ENCODE measurements at regions of chr7 and their contacts with region 1.

Region 1: GRCh38 chr7:104883718-104884452 is 130.1 kb upstream of the KMT2E start:
- DNase-seq: peak; percentile 83 to 97
- H3K4me3 ChIP-seq: no peak overlapping the region
- CTCF ChIP-seq: peak in 1 of 3 donors; percentile 27
- POLR2A ChIP-seq: no peak

Region 2: DNA sequence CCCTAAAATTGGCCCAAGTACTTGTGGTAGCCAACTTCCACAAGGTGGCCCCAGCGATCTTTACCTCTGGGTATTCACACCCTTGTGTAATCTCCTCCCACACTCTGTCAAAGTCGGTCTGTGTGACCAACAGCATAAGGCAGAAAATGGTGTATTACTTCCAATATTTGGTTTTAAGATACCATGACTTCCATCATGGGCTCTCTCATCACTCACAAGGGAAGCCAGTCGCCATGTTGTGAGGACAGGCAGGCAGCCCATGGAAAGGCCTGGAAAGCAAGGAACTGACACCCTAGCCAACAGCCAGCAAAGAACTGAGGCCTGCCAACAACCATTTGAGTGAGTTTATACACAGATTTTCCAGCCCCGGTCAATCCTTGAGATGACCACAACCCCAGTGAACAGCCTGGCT is 39.1 kb after region 1 on chr7:
- intact Hi-C with region 1: loop called (anchors 5 kb)
- DNase-seq: peak; percentile 79 to 88
- H3K4me3 ChIP-seq: no peak overlapping the region
- CTCF ChIP-seq: peak in 1 of 3 donors; percentile 60
- POLR2A ChIP-seq: no peak

Measured in lower leg skin (tissue), 4 donors.